Tibial artery (tissue), 4 donors: ENCODE measurements at regions of chr13 and their contacts with region 1.

Region 1: GRCh38 chr13:80654638-80655249 is 313.8 kb upstream of the SPRY2 start:
- DNase-seq: no peak
- H3K4me3 ChIP-seq: no peak overlapping the region
- H3K27ac ChIP-seq: no peak overlapping the region
- H3K4me1 ChIP-seq: no peaks in the 10 kb centered on the region
- H3K27me3 ChIP-seq: no peaks in the 10 kb centered on the region
- CTCF ChIP-seq: no peak

Region 2: DNA sequence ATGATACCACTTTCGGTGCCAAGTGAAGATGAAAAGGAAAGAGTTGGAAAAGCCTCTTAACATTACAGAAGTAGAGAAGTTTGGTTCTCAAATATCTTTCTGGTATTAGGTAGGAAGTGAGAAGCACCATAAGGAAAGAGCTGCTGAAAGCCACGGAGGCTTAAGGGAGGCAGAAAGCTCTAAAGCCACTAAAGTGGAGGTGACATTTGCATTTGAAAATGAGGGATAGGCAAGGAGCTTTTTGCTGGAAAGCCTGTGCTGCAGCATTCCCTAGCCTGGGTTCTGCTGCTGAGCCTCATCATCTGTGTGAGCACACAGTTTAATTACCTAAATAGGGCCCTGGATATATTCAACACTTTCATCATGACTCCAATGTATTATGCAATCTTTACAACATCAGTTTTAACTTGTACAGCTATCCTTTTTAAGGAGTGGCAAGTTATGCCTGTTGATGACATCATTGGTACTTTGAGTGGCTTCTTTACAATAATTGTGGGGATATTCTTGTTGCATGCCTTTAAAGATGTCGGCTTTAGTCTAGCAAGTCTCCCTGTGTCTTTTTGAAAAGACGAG is 1564.1 kb before region 1 on chr13:
- intact Hi-C with region 1: loop called (anchors 5 kb)
- DNase-seq: no peak
- H3K4me3 ChIP-seq: no peak overlapping the region
- H3K27ac ChIP-seq: no peak overlapping the region
- H3K4me1 ChIP-seq: no peaks in the 10 kb centered on the region
- H3K27me3 ChIP-seq: no peaks in the 10 kb centered on the region
- CTCF ChIP-seq: no peak